IMR-90 (cell line): ENCODE measurements at regions of chr7 and their contacts with region 1.

Region 1: DNA sequence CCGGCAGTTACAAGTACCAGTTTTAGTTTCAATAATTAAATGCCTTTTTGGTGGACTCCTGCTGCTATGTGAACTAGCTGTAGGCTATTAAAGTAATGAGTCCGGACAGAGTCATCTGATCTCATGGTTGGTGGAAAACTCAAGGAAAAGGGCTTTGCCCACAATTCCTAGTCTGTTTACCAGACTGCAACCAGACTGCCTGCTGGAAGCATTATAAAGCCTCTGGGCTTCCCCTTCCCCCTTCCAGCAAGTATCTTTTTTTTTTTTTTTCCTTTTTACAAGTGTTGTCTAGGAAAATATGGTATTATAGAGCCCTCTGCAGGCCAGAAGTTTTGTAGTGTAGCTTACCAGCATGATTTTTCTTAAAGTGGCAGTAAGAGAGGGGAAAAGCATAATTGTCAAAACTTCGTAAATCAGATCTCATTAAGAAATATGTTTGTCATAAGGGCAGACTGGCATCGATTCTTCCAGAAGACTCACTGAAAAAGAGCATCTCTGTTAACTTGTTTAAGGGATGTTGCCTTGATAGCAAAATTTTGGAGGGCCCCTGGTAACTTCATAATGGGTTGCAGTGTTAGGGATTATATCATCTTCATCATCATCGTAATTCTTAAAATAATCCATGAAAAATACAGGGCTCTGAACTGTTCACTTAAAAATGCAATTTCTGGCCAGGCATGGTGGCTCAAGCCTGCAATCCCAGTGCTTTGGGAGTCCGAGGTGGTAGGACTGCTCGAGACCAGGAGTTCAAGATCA is 181.3 kb downstream of the TAX1BP1 start:
- DNase-seq: peak; percentile 92
- ATAC-seq: peak; percentile 84
- H3K4me3 ChIP-seq: no peak overlapping the region
- H3K27ac ChIP-seq: no peak overlapping the region
- H3K4me1 ChIP-seq: peaks cover 19% of the 10 kb centered on the region
- H3K27me3 ChIP-seq: no peaks in the 10 kb centered on the region
- CTCF ChIP-seq: peak; percentile 74
- POLR2A ChIP-seq: no peak
- RAD21 ChIP-seq: peak; percentile 77

Region 2: DNA sequence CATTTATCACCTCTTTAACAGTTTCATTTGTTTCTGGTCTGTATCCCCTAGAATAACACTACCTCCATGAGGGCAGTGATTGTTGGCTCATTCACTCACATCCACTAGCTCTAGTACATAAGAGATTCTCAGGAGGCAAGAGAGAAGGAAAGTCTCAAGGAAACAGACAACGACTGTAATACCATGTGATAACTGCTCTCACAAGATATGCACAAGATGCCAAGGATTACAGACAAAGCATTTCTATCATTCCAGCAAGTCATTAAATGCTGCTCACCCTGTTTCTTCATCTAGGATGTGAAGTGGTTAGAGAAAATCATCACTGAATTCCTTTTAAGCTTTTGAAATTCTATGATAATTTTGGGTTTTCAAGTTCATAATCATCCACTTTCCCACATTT is 373.9 kb before region 1 on chr7:
- CTCF ChIA-PET with region 1: no interaction called
- POLR2A ChIA-PET with region 1: no interaction called
- dilution Hi-C with region 1: no loop called
- in situ Hi-C with region 1: no loop called
- intact Hi-C with region 1: no loop called
- DNase-seq: peak; percentile 69
- ATAC-seq: peak; percentile 86
- H3K4me3 ChIP-seq: no peak overlapping the region
- H3K27ac ChIP-seq: no peak overlapping the region
- H3K4me1 ChIP-seq: no peaks in the 10 kb centered on the region
- H3K27me3 ChIP-seq: no peaks in the 10 kb centered on the region
- CTCF ChIP-seq: no peak
- POLR2A ChIP-seq: no peak
- RAD21 ChIP-seq: no peak

Region 3: DNA sequence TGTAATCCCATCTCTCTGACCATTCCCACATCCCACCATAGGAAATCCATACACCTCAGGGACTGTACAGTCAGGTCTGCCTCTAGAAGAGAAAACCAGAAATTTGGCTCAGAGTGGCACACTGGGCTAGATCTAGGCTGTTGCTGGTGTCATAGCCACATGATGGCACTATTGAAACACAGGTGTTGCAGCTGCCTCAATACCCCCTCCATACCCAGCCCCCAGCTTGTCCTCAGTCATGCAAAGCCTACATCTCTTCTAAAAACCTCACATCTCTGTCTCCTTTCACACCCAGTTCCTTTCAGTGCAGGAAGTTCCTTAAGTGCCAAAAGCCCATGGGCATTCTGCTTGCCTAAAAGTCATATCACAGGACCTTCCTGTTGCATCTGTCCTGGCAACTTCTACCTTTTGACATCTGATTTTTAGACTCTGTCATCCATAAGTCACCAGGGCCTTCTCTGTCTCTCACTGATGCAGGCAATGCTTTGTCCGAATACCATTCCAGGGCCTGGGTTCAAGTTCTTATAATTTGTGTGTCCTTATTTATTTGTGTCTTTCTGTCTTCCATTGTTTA is 231.6 kb before region 1 on chr7:
- CTCF ChIA-PET with region 1: no interaction called
- POLR2A ChIA-PET with region 1: no interaction called
- dilution Hi-C with region 1: no loop called
- in situ Hi-C with region 1: no loop called
- intact Hi-C with region 1: loop called (anchors 1 kb)
- DNase-seq: peak; percentile 31
- ATAC-seq: peak; percentile 73
- H3K4me3 ChIP-seq: no peak overlapping the region
- H3K27ac ChIP-seq: no peak overlapping the region
- H3K4me1 ChIP-seq: 0 out of 2 replicates have a peak, but pooled peaks cover 2% of the 10 kb centered on the region
- H3K27me3 ChIP-seq: no peaks in the 10 kb centered on the region
- CTCF ChIP-seq: peak; percentile 45
- POLR2A ChIP-seq: no peak
- RAD21 ChIP-seq: peak; percentile 64

Region 4: GRCh38 chr7:27774717-27775328 is 146.4 kb before region 1 on chr7:
- CTCF ChIA-PET with region 1: interaction called, 11 read pairs
- POLR2A ChIA-PET with region 1: no interaction called
- dilution Hi-C with region 1: no loop called
- in situ Hi-C with region 1: no loop called
- intact Hi-C with region 1: loop called (anchors 5 kb)
- DNase-seq: peak; percentile 58
- ATAC-seq: peak; percentile 53; the same call in 1 of the 2 replicates
- H3K4me3 ChIP-seq: no peak overlapping the region
- H3K27ac ChIP-seq: no peak overlapping the region
- H3K4me1 ChIP-seq: no peaks in the 10 kb centered on the region
- H3K27me3 ChIP-seq: no peaks in the 10 kb centered on the region
- CTCF ChIP-seq: peak; percentile 69
- POLR2A ChIP-seq: no peak
- RAD21 ChIP-seq: peak; percentile 74

Region 5: GRCh38 chr7:27842094-27842692 is 79.1 kb before region 1 on chr7:
- CTCF ChIA-PET with region 1: no interaction called
- POLR2A ChIA-PET with region 1: no interaction called
- dilution Hi-C with region 1: no loop called
- in situ Hi-C with region 1: no loop called
- intact Hi-C with region 1: no loop called
- DNase-seq: no peak
- ATAC-seq: no peak
- H3K4me3 ChIP-seq: no peak overlapping the region
- H3K27ac ChIP-seq: no peak overlapping the region
- H3K4me1 ChIP-seq: no peaks in the 10 kb centered on the region
- H3K27me3 ChIP-seq: no peaks in the 10 kb centered on the region
- CTCF ChIP-seq: no peak
- POLR2A ChIP-seq: no peak
- RAD21 ChIP-seq: no peak

Region 6: GRCh38 chr7:28020302-28020940 is 99.2 kb after region 1 on chr7:
- CTCF ChIA-PET with region 1: no interaction called
- POLR2A ChIA-PET with region 1: no interaction called
- dilution Hi-C with region 1: no loop called
- in situ Hi-C with region 1: no loop called
- intact Hi-C with region 1: loop called (anchors 2 kb)
- DNase-seq: peak; percentile 77
- ATAC-seq: peak; percentile 93
- H3K4me3 ChIP-seq: no peak overlapping the region
- H3K27ac ChIP-seq: no peak overlapping the region
- H3K4me1 ChIP-seq: peaks cover 12% of the 10 kb centered on the region
- H3K27me3 ChIP-seq: no peaks in the 10 kb centered on the region
- CTCF ChIP-seq: peak; percentile 87
- POLR2A ChIP-seq: no peak
- RAD21 ChIP-seq: peak; percentile 96

Region 7: GRCh38 chr7:28096713-28097112 is 175.5 kb after region 1 on chr7:
- CTCF ChIA-PET with region 1: interaction called, 7 read pairs
- POLR2A ChIA-PET with region 1: no interaction called
- dilution Hi-C with region 1: no loop called
- in situ Hi-C with region 1: no loop called
- intact Hi-C with region 1: loop called (anchors 5 kb)
- DNase-seq: peak; percentile 72
- ATAC-seq: peak; percentile 77
- H3K4me3 ChIP-seq: no peak overlapping the region
- H3K27ac ChIP-seq: no peak overlapping the region
- H3K4me1 ChIP-seq: peaks cover 4% of the 10 kb centered on the region
- H3K27me3 ChIP-seq: no peaks in the 10 kb centered on the region
- CTCF ChIP-seq: peak; percentile 87
- POLR2A ChIP-seq: no peak
- RAD21 ChIP-seq: peak; percentile 83